ENCODE measurements at regions of chr2 and their contacts with region 1.

Region 1: GRCh38 chr2:9984217-9984739 is 32.8 kb downstream of the GRHL1 start:
- DNase-seq: peak; percentile 75
- CTCF ChIP-seq: peak; percentile 67

Region 2: DNA sequence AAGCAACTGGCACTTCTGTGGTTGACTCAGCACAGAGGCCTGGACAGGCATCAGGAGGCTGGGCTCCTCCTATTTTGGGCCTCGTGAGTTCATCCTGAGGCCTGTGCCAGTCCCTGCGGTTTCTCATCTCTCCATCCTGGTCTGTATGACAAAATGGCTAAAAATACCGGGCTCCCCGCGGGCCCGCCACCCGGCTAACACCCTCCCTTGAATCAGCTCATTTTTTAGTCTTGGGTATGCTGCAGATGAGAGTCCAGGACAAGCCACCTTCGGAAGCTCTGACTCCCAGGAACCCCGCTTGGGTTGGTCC is 291.1 kb before region 1 on chr2:
- CTCF ChIA-PET with region 1: no interaction called
- POLR2A ChIA-PET with region 1: no interaction called
- DNase-seq: no peak
- CTCF ChIP-seq: no peak

Region 3: GRCh38 chr2:9961013-9961412 is 23.3 kb before region 1 on chr2:
- CTCF ChIA-PET with region 1: interaction called, 17 read pairs
- POLR2A ChIA-PET with region 1: no interaction called
- DNase-seq: no peak
- CTCF ChIP-seq: no peak

Region 4: DNA sequence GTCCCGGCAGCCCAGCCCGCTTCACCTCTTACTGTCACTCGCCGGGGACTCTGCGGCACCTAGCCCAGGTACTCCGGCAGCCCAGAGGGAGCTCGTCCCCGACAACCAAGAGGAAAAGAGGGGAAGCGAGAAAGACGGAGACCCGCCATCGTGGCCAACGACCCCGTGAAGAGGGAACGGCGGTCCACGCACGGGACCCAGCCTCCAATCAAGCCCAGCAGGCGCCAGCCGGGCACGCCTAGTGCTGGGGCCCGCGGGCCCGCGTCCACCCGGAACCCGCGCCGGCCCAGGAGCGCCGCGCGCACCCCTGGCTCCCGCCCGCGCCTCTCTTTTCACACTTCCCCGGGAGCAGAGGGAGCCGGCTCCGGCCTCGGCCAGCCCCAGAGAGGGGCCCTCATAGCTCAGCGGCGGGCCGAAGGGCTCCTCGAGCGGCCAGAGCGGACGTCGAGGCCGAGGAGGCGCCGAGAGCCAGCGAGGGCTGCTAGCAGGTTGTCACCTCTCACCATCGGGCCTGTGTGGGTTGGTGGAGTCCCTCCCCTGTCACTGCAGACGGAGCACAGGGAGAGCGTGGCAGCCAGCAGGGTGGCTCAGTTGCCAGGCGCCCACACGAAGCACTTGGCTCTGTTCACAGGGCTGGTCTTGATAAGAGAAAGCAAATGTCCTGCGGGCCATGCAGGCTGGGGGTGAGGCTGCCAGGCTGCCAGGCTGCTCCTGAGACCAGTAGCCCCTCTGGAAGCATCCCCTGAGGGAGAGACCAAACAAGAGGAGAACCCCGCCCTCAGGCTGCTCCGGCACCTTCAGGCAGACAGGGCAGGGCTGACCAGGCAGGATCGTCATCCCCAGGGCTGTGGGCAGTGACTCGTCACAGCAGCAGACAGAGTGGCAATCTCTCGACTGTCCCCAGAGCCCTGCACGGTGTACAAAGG is 22.2 kb after region 1 on chr2:
- CTCF ChIA-PET with region 1: interaction called, 11 read pairs
- POLR2A ChIA-PET with region 1: no interaction called
- DNase-seq: no peak
- CTCF ChIP-seq: no peak

Region 5: DNA sequence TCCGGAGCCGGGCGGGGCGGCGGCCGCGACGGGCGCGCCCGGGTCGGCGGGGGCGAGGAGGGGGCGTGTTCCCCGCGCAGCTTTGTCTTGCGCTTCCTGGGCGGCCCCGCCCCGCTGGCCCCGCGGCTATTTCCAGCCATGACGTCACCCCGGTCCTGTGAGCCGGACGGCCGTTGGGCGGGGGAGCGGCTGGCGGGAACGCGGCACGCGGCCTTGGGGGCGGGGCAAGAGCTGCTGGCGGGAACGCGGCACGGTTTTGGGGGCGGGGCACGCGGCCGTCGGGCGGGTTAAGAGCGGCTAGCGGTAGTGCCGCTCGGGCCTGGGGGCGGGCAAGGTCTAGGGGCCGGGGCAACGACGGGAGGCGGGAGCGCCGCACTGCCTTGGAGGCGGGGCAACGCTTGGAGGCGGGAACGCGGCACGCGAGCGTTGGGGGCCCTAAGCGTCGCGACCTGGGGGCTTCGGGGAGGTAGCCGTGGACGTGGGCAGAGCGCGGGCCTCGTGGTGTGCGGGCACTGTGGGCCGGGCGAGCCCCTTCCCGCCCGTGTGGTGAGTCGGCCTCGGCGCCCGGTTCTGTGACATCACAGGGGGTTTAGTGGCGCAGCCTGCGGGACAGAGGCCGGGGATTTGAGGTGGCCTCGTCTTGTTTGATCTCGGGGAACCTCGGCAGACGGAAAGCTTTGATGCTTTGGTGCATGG is 59.8 kb after region 1 on chr2:
- CTCF ChIA-PET with region 1: interaction called, 87 read pairs
- POLR2A ChIA-PET with region 1: no interaction called
- DNase-seq: peak; percentile 93
- CTCF ChIP-seq: no peak

Region 6: DNA sequence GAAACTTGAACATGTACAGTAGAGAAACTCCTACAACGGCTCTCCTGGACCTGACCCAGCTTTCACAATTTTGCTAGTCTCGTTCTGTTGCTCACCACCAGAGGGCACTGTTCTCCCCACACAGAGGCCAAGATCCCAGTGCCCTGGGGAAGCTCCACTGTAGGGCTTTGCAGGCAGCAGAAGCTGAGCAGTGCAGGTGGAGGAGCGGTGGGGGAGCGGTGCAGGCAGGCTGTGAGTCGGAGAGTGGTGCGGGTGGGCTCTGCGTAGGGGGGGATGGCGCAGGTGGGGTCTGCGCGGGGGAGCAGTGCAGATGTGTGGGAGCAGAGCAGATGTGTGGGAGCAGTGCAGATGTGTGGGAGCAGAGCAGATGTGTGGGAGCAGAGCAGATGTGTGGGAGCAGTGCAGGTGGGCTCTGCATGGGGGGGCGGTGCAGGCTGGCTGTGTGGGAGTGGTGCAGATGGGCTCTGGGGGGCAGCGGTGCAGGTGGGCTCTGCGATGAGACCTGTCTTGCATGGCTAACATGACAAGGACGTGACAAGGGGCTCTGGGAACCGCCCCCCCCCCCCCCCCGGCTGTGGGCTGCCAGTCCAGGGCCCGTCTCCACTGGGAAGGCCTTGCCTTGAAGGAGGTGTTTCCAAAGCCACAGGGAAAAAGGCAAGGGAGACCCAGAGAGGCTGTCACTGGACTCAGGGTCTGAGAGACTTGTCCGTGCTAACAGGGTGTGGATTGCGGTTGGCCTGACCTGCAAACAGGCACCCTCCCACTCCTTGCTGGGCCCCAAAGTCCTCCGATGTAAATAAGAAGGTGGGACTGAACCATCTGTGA is 88.6 kb after region 1 on chr2:
- CTCF ChIA-PET with region 1: interaction called, 23 read pairs
- POLR2A ChIA-PET with region 1: no interaction called
- DNase-seq: peak; percentile 90
- CTCF ChIP-seq: peak; percentile 83

Measured in GM10248 (cell line).